Calu3 (cell line): ENCODE measurements at regions of chr2 and their contacts with region 1.

Region 1: GRCh38 chr2:32264422-32265105 is at the start of gene NLRC4:
- DNase-seq: no peak
- H3K4me3 Mint-ChIP-seq: no peak within 1 kb of the TSS
- H3K27ac Mint-ChIP-seq: no peak within 1 kb of the TSS
- H3K4me1 Mint-ChIP-seq: no peaks in the 10 kb centered on the region
- H3K27me3 Mint-ChIP-seq: no peaks in the 10 kb centered on the region
- CTCF ChIP-seq: no peak
- total RNA-seq, gene NLRC4: not detected in 2 replicates

Region 2: GRCh38 chr2:31770741-31771140 is 493.8 kb before region 1 on chr2:
- CTCF ChIA-PET with region 1: no interaction called
- intact Hi-C with region 1: no loop called
- DNase-seq: no peak
- H3K4me3 Mint-ChIP-seq: no peak overlapping the region
- H3K27ac Mint-ChIP-seq: no peak overlapping the region
- H3K4me1 Mint-ChIP-seq: peaks cover 5% of the 10 kb centered on the region
- H3K27me3 Mint-ChIP-seq: no peaks in the 10 kb centered on the region
- CTCF ChIP-seq: no peak

Region 3: GRCh38 chr2:33607178-33607803 is 1342.7 kb after region 1 on chr2:
- CTCF ChIA-PET with region 1: interaction called, 10 read pairs
- intact Hi-C with region 1: no loop called
- DNase-seq: no peak
- H3K4me3 Mint-ChIP-seq: no peak overlapping the region
- H3K27ac Mint-ChIP-seq: no peak overlapping the region
- H3K4me1 Mint-ChIP-seq: no peaks in the 10 kb centered on the region
- H3K27me3 Mint-ChIP-seq: no peaks in the 10 kb centered on the region
- CTCF ChIP-seq: no peak